GM18951 (cell line): ENCODE measurements at regions of chr15 and their contacts with region 1.

Region 1: GRCh38 chr15:41465822-41466421 is 27.8 kb upstream of the ITPKA start:
- POLR2A ChIP-seq: no peak

Region 2: GRCh38 chr15:41341519-41341918 is 124.4 kb before region 1 on chr15:
- in situ Hi-C with region 1: no loop called
- POLR2A ChIP-seq: no peak

Region 3: GRCh38 chr15:41394924-41395323 is 71.0 kb before region 1 on chr15:
- in situ Hi-C with region 1: no loop called
- POLR2A ChIP-seq: no peak

Region 4: DNA sequence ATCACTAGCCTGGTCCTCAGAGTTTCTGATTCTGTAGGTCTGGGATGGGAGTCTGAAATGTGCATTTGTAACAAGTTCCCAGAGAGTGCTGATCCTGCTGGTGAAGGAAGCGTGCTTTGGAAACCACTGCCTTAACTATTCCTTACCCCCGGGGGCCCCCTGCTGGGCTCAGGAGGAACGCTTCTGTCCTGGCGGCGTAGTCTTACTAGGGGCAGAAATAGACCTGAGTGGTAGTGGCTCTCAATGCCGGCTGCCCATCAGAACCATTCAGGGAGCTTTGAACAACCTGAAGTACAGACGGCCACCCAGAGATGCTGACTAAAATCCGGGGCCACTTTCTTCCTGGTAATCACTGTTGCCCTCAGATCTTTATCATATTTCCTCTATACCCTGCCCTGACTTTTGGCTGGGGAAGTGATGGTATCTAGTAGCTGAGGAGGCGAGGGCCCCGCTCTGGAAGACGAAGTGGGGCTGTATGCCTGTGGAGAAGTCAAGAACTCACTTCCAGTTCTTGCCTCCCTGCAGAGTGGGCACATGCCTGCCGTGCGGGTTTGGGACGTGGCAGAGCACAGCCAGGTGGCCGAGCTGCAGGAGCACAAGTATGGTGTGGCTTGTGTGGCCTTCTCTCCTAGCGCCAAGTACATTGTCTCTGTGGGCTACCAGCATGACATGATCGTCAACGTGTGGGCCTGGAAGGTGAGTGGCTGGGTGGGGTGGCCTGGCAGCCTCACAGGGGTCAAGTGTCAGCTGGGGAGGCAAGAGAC is 345.7 kb after region 1 on chr15:
- in situ Hi-C with region 1: loop called (anchors 10 kb)
- POLR2A ChIP-seq: no peak